Mammary epithelial cell (primary cell): ENCODE measurements at regions of chr13 and their contacts with region 1.

Region 1: GRCh38 chr13:102724923-102725322 is 30.1 kb upstream of the METTL21C start:
- DNase-seq: peak; percentile 93
- H3K4me3 ChIP-seq: no peak overlapping the region
- H3K27ac ChIP-seq: no peak overlapping the region
- H3K4me1 ChIP-seq: peaks cover 16% of the 10 kb centered on the region
- H3K27me3 ChIP-seq: no peaks in the 10 kb centered on the region
- CTCF ChIP-seq: peak; percentile 71 to 74

Region 2: GRCh38 chr13:102580552-102581169 is 144.3 kb before region 1 on chr13:
- CTCF ChIA-PET with region 1: no interaction called
- dilution Hi-C with region 1: no loop called
- in situ Hi-C with region 1: no loop called
- intact Hi-C with region 1: loop called (anchors 1 kb)
- DNase-seq: peak; percentile 51
- H3K4me3 ChIP-seq: no peak overlapping the region
- H3K27ac ChIP-seq: no peak overlapping the region
- H3K4me1 ChIP-seq: no peaks in the 10 kb centered on the region
- H3K27me3 ChIP-seq: no peaks in the 10 kb centered on the region
- CTCF ChIP-seq: peak; percentile 74 to 76

Region 3: GRCh38 chr13:102645701-102646100 is 79.2 kb before region 1 on chr13:
- CTCF ChIA-PET with region 1: no interaction called
- dilution Hi-C with region 1: no loop called
- in situ Hi-C with region 1: no loop called
- intact Hi-C with region 1: loop called (anchors 5 kb)
- DNase-seq: no peak
- H3K4me3 ChIP-seq: no peak overlapping the region
- H3K27ac ChIP-seq: no peak overlapping the region
- H3K4me1 ChIP-seq: no peaks in the 10 kb centered on the region
- H3K27me3 ChIP-seq: no peaks in the 10 kb centered on the region
- CTCF ChIP-seq: no peak

Region 4: GRCh38 chr13:102751886-102752285 is 27.0 kb after region 1 on chr13:
- CTCF ChIA-PET with region 1: no interaction called
- dilution Hi-C with region 1: no loop called
- in situ Hi-C with region 1: no loop called
- intact Hi-C with region 1: loop called (anchors 1 kb)
- DNase-seq: no peak
- H3K4me3 ChIP-seq: no peak overlapping the region
- H3K27ac ChIP-seq: no peak overlapping the region
- H3K4me1 ChIP-seq: peaks cover 3% of the 10 kb centered on the region
- H3K27me3 ChIP-seq: no peaks in the 10 kb centered on the region
- CTCF ChIP-seq: no peak

Region 5: DNA sequence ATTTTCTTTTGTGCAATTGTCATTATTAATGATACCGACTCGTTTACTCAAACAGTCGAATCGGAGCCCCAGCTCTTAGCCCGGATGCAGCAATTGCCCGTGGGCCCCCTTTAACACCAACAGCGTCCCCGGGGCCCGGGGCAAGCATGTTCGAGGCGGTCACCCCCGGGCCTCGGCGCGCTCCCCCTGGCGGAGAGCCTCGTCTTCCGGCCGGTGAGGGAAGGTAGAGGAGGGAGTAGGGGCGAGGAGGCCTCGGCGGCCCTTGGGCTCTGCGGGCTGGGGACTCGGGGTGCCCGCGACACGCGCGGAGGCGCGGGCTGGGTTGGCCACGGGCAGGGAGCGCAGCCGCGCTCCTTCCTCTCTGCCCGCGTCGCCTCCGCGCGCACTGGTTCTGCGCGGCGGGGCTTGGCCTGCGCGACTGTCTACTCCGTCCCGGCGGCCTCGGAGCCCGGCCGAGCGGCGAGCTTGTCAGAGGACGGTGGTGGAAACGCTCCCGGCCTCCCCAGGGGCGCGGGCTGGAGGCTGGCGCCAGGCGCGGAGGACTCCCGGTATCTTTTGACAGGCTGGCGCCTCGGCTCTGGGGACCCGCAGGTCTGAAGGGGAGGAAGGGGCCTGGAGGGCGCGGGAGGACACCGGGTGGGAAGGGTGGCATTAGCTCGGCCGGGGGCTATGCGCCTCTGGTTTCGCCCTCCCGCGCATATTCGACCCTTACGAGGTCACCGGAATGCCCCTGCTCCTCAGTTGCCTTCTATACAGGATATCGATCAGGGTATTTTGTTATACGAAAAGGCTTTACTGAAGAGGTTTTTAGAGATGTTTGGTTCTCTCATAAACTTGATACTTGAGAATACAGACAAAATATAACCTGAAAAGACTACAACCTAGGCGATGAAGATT is 75.5 kb after region 1 on chr13:
- CTCF ChIA-PET with region 1: no interaction called
- dilution Hi-C with region 1: no loop called
- in situ Hi-C with region 1: no loop called
- intact Hi-C with region 1: loop called (anchors 1 kb)
- DNase-seq: peak; percentile 79
- H3K4me3 ChIP-seq: peak overlapping the region; percentile 83 to 98 (median 90)
- H3K27ac ChIP-seq: peak overlapping the region; percentile 41
- H3K4me1 ChIP-seq: peaks cover 20% of the 10 kb centered on the region
- H3K27me3 ChIP-seq: peaks cover 2% of the 10 kb centered on the region
- CTCF ChIP-seq: peak; percentile 50 to 78

Region 6: DNA sequence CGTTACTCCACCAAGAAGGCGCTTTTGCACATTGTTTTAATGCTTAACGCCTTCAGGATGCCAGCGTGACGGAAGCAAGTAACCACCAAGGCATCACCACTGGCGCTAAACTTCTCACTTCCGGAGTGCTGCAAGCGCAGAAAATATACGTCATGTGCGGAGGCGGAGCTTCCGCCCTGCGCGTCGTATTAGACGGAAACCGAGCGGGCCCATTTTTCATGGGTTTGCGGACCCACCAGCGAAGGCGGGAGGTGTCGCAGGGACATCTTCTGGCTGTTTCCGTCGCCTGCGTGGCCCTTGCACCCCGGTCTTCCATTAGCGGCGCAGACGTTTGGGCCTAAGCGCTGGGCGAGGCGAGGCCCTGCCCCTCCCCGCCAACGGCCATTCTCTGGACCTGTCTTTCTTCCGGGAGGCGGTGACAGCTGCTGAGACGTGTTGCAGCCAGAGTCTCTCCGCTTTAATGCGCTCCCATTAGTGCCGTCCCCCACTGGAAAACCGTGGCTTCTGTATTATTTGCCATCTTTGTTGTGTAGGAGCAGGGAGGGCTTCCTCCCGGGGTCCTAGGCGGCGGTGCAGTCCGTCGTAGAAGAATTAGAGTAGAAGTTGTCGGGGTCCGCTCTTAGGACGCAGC is 120.8 kb after region 1 on chr13 and contains the start of gene ERCC5:
- CTCF ChIA-PET with region 1: no interaction called
- dilution Hi-C with region 1: no loop called
- in situ Hi-C with region 1: no loop called
- intact Hi-C with region 1: loop called (anchors 1 kb)
- DNase-seq: peak; percentile 96
- H3K4me3 ChIP-seq: peak within 1 kb of the TSS; percentile 75 to 98 (median 98)
- H3K27ac ChIP-seq: peak within 1 kb of the TSS; percentile 78
- H3K4me1 ChIP-seq: peaks cover 13% of the 10 kb centered on the region
- H3K27me3 ChIP-seq: no peaks in the 10 kb centered on the region
- CTCF ChIP-seq: peak in 1 of 2 donors; percentile 12
- total RNA-seq, gene ERCC5: 56.3 to 59.1 TPM

Region 7: DNA sequence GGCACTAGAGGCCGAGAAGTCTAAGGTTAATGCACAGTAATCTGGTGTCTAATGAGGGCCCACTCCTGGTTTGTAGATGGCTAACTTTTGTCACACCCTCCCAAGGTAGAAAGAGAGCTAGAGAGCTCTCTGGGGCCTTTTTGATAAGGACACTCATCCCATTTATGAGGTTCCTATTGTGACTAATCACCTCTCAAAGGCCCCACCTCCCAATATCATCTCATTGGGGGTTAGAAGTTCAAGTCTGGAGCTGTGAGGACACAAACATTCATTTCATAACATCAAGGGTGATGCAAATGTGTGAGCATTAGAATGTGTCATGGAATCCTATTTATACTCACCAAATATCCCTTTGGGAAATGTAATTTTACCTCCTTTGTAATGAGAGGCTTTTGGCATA is 420.5 kb after region 1 on chr13:
- CTCF ChIA-PET with region 1: no interaction called
- dilution Hi-C with region 1: no loop called
- in situ Hi-C with region 1: no loop called
- intact Hi-C with region 1: no loop called
- DNase-seq: peak; percentile 71
- H3K4me3 ChIP-seq: no peak overlapping the region
- H3K27ac ChIP-seq: no peak overlapping the region
- H3K4me1 ChIP-seq: no peaks in the 10 kb centered on the region
- H3K27me3 ChIP-seq: no peaks in the 10 kb centered on the region
- CTCF ChIP-seq: no peak